HepG2 (cell line): ENCODE measurements at regions of chr17 and their contacts with region 1.

Region 1: GRCh38 chr17:7403977-7404736 is at the start of gene TMEM256:
- DNase-seq: peak; percentile 98
- ATAC-seq: peak; percentile 95
- H3K4me3 ChIP-seq: peak within 1 kb of the TSS; percentile 76 to 95 (median 80)
- H3K27ac ChIP-seq: peak within 1 kb of the TSS; percentile 99
- H3K4me1 ChIP-seq: peaks cover 18% of the 10 kb centered on the region
- H3K27me3 ChIP-seq: no peaks in the 10 kb centered on the region; a peak in 2 of 5 replicates
- CTCF ChIP-seq: no peak
- EP300 ChIP-seq: peak in 1 of 2 experiments; percentile 34; a peak in 1 of 4 replicates
- POLR2A ChIP-seq: peak; percentile 94
- RAD21 ChIP-seq: no peak; the same call in 1 of the 2 replicates
- total RNA-seq, gene TMEM256: 231 and 246 TPM in 2 replicates

Region 2: DNA sequence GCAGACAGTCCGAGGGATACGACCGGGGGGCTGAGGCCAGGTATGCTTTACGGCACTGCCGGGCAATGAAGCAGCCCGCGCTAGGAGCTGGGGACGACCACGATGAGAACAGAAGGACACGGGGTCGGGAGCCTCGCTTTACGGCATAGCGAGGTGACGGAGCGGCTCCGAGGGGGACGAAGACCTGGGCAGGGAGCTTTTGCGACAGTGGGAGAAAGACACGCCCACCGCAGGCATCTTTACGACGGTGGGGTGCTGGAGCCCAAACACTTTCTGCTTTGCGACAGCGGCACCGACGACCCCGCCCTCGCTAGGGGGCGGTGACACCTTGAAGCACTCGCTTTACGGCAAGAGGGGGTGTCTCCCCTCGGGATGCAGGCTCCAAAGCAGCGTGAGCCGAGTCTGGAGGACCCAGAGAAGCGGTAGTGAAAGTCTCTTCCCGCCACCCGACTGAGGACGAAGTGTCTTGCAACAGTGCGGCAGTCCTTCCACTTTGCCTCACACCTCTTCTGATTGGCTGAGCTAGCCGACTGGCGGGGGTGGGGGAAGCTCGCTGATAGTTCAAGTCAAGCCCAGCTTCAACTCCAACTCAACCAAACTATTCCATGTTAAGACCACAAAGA is 74.7 kb before region 1 on chr17:
- CTCF ChIA-PET with region 1: no interaction called
- POLR2A ChIA-PET with region 1: interaction called, 22 read pairs
- in situ Hi-C with region 1: no loop called
- intact Hi-C with region 1: no loop called
- DNase-seq: peak; percentile 97
- ATAC-seq: peak; percentile 81
- H3K4me3 ChIP-seq: peak overlapping the region; percentile 90 to 97 (median 91)
- H3K27ac ChIP-seq: peak overlapping the region; percentile 63
- H3K4me1 ChIP-seq: peaks cover 26% of the 10 kb centered on the region
- H3K27me3 ChIP-seq: peaks cover 0 to 4% of the 10 kb centered on the region in 2 experiments; a peak in 2 of 5 replicates
- CTCF ChIP-seq: 0 out of 2 replicates have a peak, but pooled peaks have one; percentile 35
- EP300 ChIP-seq: no peak; a peak in 1 of 4 replicates
- POLR2A ChIP-seq: peak; percentile 68 to 85
- RAD21 ChIP-seq: no peak

Region 3: DNA sequence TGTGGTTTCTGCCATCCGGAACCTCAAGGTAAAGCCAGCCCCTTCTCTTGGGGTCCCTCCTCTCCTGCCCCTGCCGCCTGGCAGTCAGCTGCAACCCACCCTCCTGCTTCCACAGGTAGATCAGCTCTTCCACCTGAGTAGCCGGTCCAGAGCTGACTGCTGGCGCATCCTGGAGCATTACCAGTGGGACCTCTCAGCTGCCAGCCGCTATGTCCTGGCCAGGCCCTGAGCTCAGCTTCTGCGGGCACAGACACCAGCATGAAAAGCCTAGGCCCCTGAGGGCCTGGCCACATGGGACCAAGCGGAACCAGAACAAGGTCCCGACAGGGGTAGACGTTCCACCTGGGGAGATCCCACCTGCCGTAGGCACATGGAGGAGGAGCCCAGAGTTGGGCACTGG is 15.3 kb before region 1 on chr17:
- CTCF ChIA-PET with region 1: no interaction called
- POLR2A ChIA-PET with region 1: interaction called, 76 read pairs
- in situ Hi-C with region 1: no loop called
- intact Hi-C with region 1: no loop called
- DNase-seq: no peak
- ATAC-seq: no peak
- H3K4me3 ChIP-seq: no peak overlapping the region
- H3K27ac ChIP-seq: no peak overlapping the region
- H3K4me1 ChIP-seq: peaks cover 7% of the 10 kb centered on the region; the same call in 1 of the 2 replicates
- H3K27me3 ChIP-seq: no peaks in the 10 kb centered on the region
- CTCF ChIP-seq: no peak
- EP300 ChIP-seq: no peak
- POLR2A ChIP-seq: no peak
- RAD21 ChIP-seq: no peak

Region 4: GRCh38 chr17:7444682-7445618 is 40.8 kb after region 1 on chr17 and contains the start of gene CHRNB1:
- CTCF ChIA-PET with region 1: no interaction called
- POLR2A ChIA-PET with region 1: interaction called, 48 read pairs
- in situ Hi-C with region 1: no loop called
- intact Hi-C with region 1: no loop called
- DNase-seq: peak; percentile 85
- ATAC-seq: peak; percentile 87
- H3K4me3 ChIP-seq: peak within 1 kb of the TSS; percentile 62 to 85 (median 63)
- H3K27ac ChIP-seq: peak within 1 kb of the TSS; percentile 73
- H3K4me1 ChIP-seq: peaks cover 50% of the 10 kb centered on the region
- H3K27me3 ChIP-seq: peaks cover 6 to 27% of the 10 kb centered on the region in 2 experiments; a peak in 4 of 5 replicates
- CTCF ChIP-seq: peak; percentile 69
- EP300 ChIP-seq: 0 out of 4 replicates have a peak, but pooled peaks of 1 of the 2 experiments have one; percentile 3
- POLR2A ChIP-seq: peak in 1 of 2 experiments; percentile 76; a peak in 2 of 4 replicates
- RAD21 ChIP-seq: peak; percentile 43; the same call in 1 of the 2 replicates
- total RNA-seq, gene CHRNB1: 3.6 and 5.4 TPM in 2 replicates

Region 5: DNA sequence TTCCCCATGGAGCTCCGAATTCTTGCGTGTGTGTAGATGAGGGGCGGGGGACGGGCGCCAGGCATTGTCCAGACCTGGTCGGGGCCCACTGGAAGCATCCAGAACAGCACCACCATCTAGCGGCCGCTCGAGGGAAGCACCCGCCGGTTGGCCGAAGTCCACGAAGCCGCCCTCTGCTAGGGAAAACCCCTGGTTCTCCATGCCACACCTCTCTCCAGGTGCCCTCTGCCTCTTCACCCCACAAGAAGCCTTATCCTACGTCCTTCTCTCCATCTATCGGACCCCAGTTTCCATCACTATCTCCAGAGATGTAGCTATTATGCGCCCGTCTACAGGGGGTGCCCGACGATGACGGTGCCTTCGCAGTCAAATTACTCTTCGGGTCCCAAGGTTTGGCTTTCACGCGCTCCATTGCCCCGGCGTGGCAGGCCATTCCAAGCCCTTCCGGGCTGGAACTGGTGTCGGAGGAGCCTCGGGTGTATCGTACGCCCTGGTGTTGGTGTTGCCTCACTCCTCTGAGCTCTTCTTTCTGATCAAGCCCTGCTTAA is 156.9 kb after region 1 on chr17:
- CTCF ChIA-PET with region 1: no interaction called
- POLR2A ChIA-PET with region 1: interaction called, 33 read pairs
- in situ Hi-C with region 1: no loop called
- intact Hi-C with region 1: no loop called
- DNase-seq: peak; percentile 77
- ATAC-seq: peak; percentile 77
- H3K4me3 ChIP-seq: peak overlapping the region; percentile 90 to 94 (median 92)
- H3K27ac ChIP-seq: peak overlapping the region; percentile 75
- H3K4me1 ChIP-seq: peaks cover 67% of the 10 kb centered on the region
- H3K27me3 ChIP-seq: no peaks in the 10 kb centered on the region; a peak in 1 of 5 replicates
- CTCF ChIP-seq: peak; percentile 96
- EP300 ChIP-seq: no peak
- POLR2A ChIP-seq: peak in 1 of 2 experiments; percentile 51; a peak in 1 of 4 replicates
- RAD21 ChIP-seq: peak; percentile 90

Region 6: DNA sequence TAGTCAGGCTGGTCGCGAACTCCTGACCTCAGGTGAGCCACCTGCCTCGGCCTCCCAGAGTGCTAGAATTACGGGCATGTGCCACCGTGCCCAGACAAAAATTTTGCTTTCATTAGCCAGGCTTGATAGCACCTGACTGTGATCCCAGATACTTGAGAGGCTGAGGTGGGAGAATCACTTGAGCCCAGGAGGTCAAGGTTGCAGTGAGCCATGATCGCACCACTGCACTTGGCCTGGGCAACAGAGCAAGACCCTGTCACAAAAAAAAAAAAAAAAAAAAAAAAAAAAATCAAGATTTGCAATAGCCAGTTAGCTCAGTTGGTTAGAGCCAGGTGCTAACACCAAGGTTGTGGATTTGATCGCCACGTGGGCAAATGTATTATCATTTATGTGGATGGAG is 216.7 kb after region 1 on chr17:
- CTCF ChIA-PET with region 1: no interaction called
- POLR2A ChIA-PET with region 1: no interaction called
- in situ Hi-C with region 1: no loop called
- intact Hi-C with region 1: no loop called
- DNase-seq: no peak
- ATAC-seq: no peak
- H3K4me3 ChIP-seq: no peak overlapping the region
- H3K27ac ChIP-seq: no peak overlapping the region
- H3K4me1 ChIP-seq: peaks cover 39% of the 10 kb centered on the region
- H3K27me3 ChIP-seq: no peaks in the 10 kb centered on the region
- CTCF ChIP-seq: no peak
- EP300 ChIP-seq: no peak
- POLR2A ChIP-seq: no peak
- RAD21 ChIP-seq: no peak